ENCODE measurements at regions of chr1 and their contacts with region 1.

Region 1: DNA sequence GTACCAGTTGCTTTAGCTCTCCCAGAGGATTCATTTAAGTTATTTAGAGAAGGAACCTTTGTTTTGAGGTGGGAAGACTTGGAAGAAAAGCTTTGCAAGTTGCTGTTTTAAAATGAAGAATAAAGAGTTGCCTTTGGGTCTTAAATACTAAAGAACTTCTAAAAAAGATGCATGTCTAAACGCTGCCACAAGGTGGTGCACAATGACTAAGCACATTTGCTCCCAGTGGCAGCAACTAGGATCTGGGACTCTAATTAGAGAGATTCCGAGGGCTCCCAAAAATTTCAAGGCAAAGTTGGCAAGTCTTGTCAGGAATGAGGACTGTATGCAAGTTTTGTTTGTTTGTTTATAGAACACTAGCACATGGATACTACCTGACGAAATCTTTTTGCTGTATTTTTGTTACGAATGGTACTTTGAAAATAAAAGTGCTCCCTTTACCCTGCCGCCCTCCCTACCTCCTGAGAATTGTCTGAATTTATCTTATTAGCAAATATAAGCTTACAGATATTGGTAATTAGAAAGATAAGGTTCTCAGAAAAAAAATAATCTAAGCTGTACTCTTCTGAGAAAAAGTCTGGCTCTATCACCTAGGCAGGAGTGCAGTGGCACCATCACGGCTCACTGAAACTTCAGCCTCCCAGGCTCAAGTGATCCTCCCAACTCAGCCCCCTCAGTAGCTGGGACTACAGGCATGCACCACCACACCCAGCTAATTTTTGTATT is 121.8 kb downstream of the HFM1 start:
- DNase-seq: peak; percentile 60
- ATAC-seq: no peak
- H3K4me3 Mint-ChIP-seq: no peak overlapping the region
- H3K27ac Mint-ChIP-seq: no peak overlapping the region
- H3K4me1 Mint-ChIP-seq: no peaks in the 10 kb centered on the region
- H3K27me3 Mint-ChIP-seq: peaks cover 8% of the 10 kb centered on the region
- CTCF ChIP-seq: peak; percentile 84

Region 2: DNA sequence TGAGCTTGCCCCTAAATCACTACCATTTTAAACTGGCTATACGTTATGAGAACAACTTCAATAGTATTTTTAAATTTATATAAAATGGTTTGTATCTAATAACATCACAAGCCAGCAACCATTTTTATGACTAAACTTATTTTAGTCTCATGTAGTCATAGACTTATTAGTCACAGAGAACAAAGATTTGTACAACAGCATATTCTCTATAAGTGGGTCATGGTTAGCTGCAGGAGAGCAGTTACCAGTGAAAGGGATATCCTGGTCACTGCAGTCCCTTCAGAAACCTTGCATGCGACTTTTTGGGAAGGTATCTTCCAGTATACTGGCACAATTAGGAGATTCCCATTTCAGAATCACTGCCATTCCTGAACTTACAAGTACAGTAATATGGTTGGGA is 31.8 kb after region 1 on chr1:
- CTCF ChIA-PET with region 1: no interaction called
- POLR2A ChIA-PET with region 1: no interaction called
- intact Hi-C with region 1: no loop called
- DNase-seq: no peak
- ATAC-seq: no peak
- H3K4me3 Mint-ChIP-seq: no peak overlapping the region
- H3K27ac Mint-ChIP-seq: no peak overlapping the region
- H3K4me1 Mint-ChIP-seq: no peaks in the 10 kb centered on the region
- H3K27me3 Mint-ChIP-seq: peaks cover 16% of the 10 kb centered on the region
- CTCF ChIP-seq: no peak

Region 3: GRCh38 chr1:91404151-91405012 is 121.5 kb after region 1 on chr1 and contains the start of gene HFM1:
- CTCF ChIA-PET with region 1: interaction called, 3 read pairs
- POLR2A ChIA-PET with region 1: no interaction called
- intact Hi-C with region 1: loop called (anchors 5 kb)
- DNase-seq: peak; percentile 82
- ATAC-seq: peak; percentile 100
- H3K4me3 Mint-ChIP-seq: peak within 1 kb of the TSS; percentile 61
- H3K27ac Mint-ChIP-seq: no peak within 1 kb of the TSS
- H3K4me1 Mint-ChIP-seq: peaks cover 4% of the 10 kb centered on the region
- H3K27me3 Mint-ChIP-seq: peaks cover 31% of the 10 kb centered on the region
- CTCF ChIP-seq: peak; percentile 20
- total RNA-seq, gene HFM1: 0.47 TPM in 1 of 2 experiments, not detected in the other

Region 4: DNA sequence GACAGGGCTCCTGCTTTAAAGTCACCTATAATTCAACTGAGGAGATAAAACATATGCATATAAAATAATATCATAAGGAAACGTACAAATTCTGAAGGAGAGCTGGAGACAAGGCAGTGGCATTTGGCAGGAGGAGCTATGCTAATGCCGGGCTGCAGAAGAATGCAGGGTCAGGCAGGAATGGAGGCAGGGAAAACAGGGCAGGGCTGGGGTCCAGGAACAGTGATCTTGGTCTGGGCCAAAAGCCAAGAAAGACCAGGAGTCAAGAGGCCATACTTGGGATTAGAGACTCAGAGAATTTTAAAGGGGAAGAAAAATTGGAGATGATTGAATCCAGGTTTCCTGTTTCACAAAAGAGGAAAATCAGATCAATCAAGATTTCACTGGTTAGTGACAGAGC is 646.4 kb after region 1 on chr1:
- CTCF ChIA-PET with region 1: interaction called, 16 read pairs
- POLR2A ChIA-PET with region 1: no interaction called
- intact Hi-C with region 1: loop called (anchors 2 kb)
- DNase-seq: no peak
- ATAC-seq: no peak
- H3K4me3 Mint-ChIP-seq: no peak overlapping the region
- H3K27ac Mint-ChIP-seq: no peak overlapping the region
- H3K4me1 Mint-ChIP-seq: peaks cover 1% of the 10 kb centered on the region
- H3K27me3 Mint-ChIP-seq: no peaks in the 10 kb centered on the region
- CTCF ChIP-seq: no peak